Cardiac septum (tissue), 1 donor: ENCODE measurements at regions of chr5 and their contacts with region 1.

Region 1: GRCh38 chr5:11268891-11269290 is 507.9 kb upstream of the DAP start:
- DNase-seq: no peak

Region 2: DNA sequence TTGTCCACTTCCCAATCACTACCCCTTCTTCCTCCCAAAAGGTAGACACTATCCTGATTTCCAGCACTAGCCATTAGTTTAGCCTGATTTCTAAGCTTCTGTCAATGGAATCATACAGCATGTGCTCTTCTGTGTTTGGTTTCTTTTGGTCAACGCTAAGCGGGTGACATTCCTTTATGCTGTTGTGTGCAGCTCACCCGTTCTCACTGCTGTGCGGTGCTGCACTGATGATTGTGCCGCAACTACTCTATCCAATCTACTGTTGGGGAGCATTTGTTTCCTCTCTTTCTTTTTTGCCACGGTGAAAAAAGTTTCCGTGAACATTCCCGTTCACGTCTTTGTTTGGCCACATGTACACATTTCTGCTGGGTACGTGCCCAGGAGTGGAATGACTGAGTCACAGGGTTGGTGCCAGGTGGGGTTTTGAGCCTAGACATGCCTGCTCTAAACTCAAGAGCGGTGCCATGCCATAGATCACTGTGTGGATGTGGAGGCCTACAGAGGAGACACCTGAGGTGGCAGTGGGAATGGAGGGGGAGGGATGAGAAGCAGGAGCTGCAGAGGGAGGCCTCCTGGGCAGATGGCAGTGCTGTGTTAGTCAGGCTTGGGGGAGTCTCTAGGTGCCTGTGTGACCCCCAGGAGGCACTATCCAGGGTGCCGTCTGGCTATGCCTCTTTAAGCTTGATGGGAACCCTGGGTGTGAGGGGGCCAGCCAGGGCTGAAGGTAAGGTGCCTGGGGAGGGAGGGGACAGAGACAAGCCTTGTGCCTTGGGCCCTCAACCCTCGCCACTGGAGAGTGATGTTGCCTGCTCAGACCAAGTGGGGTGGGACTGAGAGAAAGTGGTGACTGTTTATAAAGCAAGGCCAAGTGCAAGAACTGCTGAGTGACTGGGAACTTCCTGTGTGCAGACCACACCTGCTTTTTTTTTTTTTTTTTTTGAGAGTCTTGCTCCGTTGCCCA is 716.4 kb before region 1 on chr5:
- intact Hi-C with region 1: no loop called
- DNase-seq: peak; percentile 74

Region 3: GRCh38 chr5:11384441-11385250 is 115.8 kb after region 1 on chr5:
- intact Hi-C with region 1: no loop called
- DNase-seq: no peak

Region 4: GRCh38 chr5:11494340-11494739 is 225.4 kb after region 1 on chr5:
- intact Hi-C with region 1: loop called (anchors 5 kb)
- DNase-seq: no peak

Region 5: DNA sequence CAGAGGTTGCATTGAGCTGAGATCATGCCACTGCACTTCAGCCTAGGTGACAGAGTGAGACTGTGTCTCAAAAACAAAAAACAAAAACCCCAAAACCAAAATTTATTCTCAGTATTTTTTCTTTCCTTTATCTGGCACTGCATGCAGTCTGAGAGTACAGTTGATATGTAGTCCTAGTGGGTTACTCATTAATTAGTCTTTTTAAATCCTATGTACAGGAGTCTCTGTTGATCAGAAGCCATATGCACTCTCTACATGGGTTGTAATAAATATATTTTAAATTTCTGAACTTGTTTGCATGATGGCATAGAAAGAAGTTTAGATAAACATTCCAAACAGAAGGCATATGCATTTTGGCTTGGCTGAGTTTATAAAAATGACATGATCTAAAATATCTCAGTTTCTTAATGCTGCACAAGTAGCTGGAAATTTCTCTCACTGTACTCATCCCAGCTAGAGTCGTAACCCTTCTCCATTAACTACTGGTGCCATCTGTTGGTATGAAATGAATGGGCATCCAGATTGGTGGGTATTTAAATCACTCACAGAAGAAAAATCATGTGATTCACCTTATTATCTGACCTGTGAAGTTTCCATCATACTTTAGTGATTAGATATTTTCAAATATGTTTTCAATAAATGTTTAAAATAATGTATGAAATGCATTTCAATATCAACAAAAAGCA is 350.6 kb after region 1 on chr5:
- intact Hi-C with region 1: loop called (anchors 5 kb)
- DNase-seq: no peak

Region 6: DNA sequence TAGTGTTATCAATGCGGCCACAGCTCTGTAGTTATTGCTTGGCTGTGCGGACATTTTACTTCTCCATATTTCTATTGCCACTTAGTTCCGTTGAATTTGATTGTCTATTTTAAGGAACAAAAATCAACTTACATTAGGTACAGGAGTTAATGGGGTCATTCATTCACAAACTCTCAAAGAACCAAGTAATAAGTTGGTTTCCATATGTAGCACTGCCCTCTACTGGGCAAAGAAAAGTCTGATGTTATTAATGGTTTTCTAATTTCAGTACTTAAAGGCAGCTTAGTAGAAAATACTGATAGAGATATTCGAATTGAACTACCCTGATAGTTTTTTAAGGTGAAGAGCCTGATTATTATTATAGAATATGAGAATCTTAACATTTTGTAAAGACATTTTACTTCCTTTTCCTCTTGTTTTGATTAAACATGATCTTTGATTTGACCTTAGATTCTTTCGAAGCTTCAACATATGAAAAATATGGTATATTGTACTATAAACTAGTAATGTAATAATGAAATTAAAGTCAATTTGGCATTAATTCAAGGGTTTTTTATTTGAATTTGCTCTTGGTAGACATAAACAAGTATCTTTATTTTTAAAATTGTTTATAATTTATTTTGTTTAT is 754.8 kb after region 1 on chr5:
- intact Hi-C with region 1: loop called (anchors 10 kb)
- DNase-seq: no peak